Panc1 (cell line): ENCODE measurements at regions of chr2 and their contacts with region 1.

Region 1: GRCh38 chr2:187547353-187547979 is 6.8 kb downstream of the TFPI start:
- DNase-seq: no peak
- ATAC-seq: peak; percentile 90
- H3K4me3 ChIP-seq: no peak overlapping the region
- H3K27ac ChIP-seq: peak overlapping the region; percentile 98
- H3K4me1 ChIP-seq: peaks cover 86% of the 10 kb centered on the region
- H3K27me3 ChIP-seq: no peaks in the 10 kb centered on the region
- CTCF ChIP-seq: no peak

Region 2: DNA sequence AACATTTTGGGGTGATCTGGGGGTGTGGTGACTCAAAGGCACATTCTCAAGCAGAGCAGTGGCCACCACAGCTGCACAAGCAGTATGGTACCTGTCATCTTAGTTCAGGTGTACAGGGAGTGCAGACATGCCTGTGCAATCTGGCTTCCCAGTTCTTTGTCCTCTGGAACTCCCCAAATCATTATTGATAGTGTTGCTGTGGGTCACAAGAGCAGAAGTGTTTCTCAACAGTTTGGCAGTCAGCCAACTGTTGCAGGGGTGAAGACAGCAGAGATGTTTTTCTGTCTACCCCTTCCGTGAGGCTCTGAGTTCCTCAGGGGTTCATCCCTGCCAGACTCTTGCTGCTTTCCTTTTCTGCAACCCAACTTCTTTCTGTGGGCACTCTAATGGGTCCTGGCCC is 492.0 kb before region 1 on chr2:
- CTCF ChIA-PET with region 1: interaction called, 10 read pairs
- POLR2A ChIA-PET with region 1: no interaction called
- in situ Hi-C with region 1: no loop called
- intact Hi-C with region 1: no loop called
- DNase-seq: no peak
- ATAC-seq: no peak
- H3K4me3 ChIP-seq: no peak overlapping the region
- H3K27ac ChIP-seq: no peak overlapping the region
- H3K4me1 ChIP-seq: no peaks in the 10 kb centered on the region
- H3K27me3 ChIP-seq: no peaks in the 10 kb centered on the region
- CTCF ChIP-seq: no peak

Region 3: GRCh38 chr2:187529977-187530721 is 17.3 kb before region 1 on chr2:
- CTCF ChIA-PET with region 1: no interaction called
- POLR2A ChIA-PET with region 1: interaction called, 16 read pairs
- in situ Hi-C with region 1: no loop called
- intact Hi-C with region 1: no loop called
- DNase-seq: no peak
- ATAC-seq: peak; percentile 90
- H3K4me3 ChIP-seq: peak overlapping the region in 1 of 2 experiments; percentile 2; a peak in 1 of 4 replicates
- H3K27ac ChIP-seq: peak overlapping the region; percentile 91
- H3K4me1 ChIP-seq: peaks cover 30% of the 10 kb centered on the region
- H3K27me3 ChIP-seq: no peaks in the 10 kb centered on the region
- CTCF ChIP-seq: no peak

Region 4: DNA sequence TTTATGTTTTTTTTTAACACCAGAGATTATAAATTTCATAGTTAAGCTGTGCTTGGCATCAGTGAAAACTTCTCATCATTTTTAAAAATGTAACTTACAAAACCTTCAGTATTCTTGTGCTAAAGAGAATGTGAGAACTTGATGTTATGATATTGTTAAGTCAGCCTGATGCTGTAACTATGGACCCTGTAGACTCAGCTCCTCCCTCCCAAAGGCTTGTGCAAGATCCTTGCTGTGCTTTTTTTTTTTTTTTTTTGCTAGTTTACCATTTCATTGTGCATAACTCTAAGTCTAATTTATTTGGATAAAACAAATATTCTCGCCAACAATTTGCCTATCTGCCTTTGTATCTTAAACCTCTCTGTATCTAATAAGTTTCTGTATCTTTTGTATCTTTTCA is 19.7 kb after region 1 on chr2:
- CTCF ChIA-PET with region 1: no interaction called
- POLR2A ChIA-PET with region 1: interaction called, 13 read pairs
- in situ Hi-C with region 1: no loop called
- intact Hi-C with region 1: no loop called
- DNase-seq: no peak
- ATAC-seq: no peak
- H3K4me3 ChIP-seq: no peak overlapping the region
- H3K27ac ChIP-seq: peak overlapping the region; percentile 62; the same call in 1 of the 2 replicates
- H3K4me1 ChIP-seq: peaks cover 13% of the 10 kb centered on the region; the same call in 1 of the 2 replicates
- H3K27me3 ChIP-seq: no peaks in the 10 kb centered on the region
- CTCF ChIP-seq: no peak